HCT116 (cell line): ENCODE measurements at regions of chr9 and their contacts with region 1.

Region 1: GRCh38 chr9:96327694-96328352 is 25.8 kb upstream of the HSD17B3 start:
- DNase-seq: no peak
- ATAC-seq: peak; percentile 77
- H3K4me3 ChIP-seq: no peak overlapping the region
- H3K27ac ChIP-seq: no peak overlapping the region
- H3K4me1 ChIP-seq: peaks cover 9 to 20% of the 10 kb centered on the region in 2 experiments
- H3K27me3 ChIP-seq: no peaks in the 10 kb centered on the region
- CTCF ChIP-seq: peak; percentile 70 to 77 (median 75); a peak in 5 of 6 replicates
- POLR2A ChIP-seq: no peak
- RAD21 ChIP-seq: peak; percentile 83

Region 2: DNA sequence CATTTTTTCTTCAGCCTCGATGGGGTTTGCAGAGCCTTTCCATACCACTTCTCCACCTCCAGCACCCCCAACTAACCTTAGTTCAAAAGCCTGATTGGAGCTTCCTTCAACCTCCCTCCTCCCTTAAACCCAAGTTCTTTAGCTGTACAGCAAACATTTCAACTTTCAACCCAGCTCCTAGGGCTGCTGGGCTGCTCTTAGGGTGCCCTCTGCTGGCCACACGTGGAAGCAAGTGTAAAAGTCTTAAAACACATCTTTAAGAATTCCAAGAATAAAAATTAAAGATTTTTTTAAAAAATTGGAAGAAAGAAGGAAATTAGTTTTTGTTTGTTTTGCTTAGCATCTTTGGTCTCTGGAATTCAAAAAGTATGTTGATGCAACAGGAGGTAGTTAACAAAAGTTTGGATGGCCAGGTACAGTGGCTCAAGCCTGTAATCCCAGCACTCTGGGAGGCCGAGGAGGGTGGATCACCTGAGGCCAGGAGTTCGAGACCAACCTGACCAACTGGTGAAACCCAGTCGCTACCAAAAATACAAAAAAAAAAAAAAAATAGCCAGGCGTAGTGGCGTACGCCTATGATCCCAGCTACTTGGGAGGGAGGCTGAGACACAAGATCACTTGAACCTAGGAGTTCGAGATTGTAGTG is 10.4 kb before region 1 on chr9:
- CTCF ChIA-PET with region 1: interaction called, 10 read pairs
- POLR2A ChIA-PET with region 1: no interaction called
- RAD21 ChIA-PET with region 1: no interaction called
- intact Hi-C with region 1: no loop called
- DNase-seq: peak; percentile 41
- ATAC-seq: peak; percentile 86
- H3K4me3 ChIP-seq: no peak overlapping the region
- H3K27ac ChIP-seq: no peak overlapping the region
- H3K4me1 ChIP-seq: no peaks in the 10 kb centered on the region
- H3K27me3 ChIP-seq: no peaks in the 10 kb centered on the region
- CTCF ChIP-seq: peak; percentile 90 to 95 (median 92)
- POLR2A ChIP-seq: no peak
- RAD21 ChIP-seq: peak; percentile 96

Region 3: GRCh38 chr9:96654443-96655197 is 326.8 kb after region 1 on chr9:
- CTCF ChIA-PET with region 1: no interaction called
- POLR2A ChIA-PET with region 1: no interaction called
- RAD21 ChIA-PET with region 1: no interaction called
- intact Hi-C with region 1: loop called (anchors 5 kb)
- DNase-seq: peak; percentile 54
- ATAC-seq: peak; percentile 76
- H3K4me3 ChIP-seq: peak overlapping the region; percentile 47 to 65
- H3K27ac ChIP-seq: peak overlapping the region; percentile 91
- H3K4me1 ChIP-seq: peaks cover 5 to 22% of the 10 kb centered on the region in 2 experiments; a peak in 3 of 4 replicates
- H3K27me3 ChIP-seq: no peaks in the 10 kb centered on the region
- CTCF ChIP-seq: no peak
- POLR2A ChIP-seq: no peak
- RAD21 ChIP-seq: no peak

Region 4: DNA sequence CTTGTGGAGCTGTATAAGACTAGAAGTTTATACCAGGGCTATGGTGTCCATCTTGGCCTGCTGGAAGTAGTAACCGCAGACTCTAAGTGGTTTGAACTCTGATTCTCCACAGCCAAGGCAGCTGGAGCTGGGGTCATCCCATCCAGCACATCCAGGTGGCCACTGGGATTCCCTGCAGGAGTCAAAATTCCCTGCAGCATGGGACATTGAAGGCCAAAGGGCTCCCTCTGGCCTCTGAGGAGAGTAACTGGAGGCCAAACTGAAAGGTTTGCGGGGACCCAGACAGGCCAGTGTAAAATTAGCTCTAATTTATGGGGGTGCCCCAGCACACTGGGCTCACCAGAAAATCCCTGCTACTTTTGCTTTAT is 339.5 kb after region 1 on chr9:
- CTCF ChIA-PET with region 1: interaction called, 13 read pairs
- POLR2A ChIA-PET with region 1: no interaction called
- RAD21 ChIA-PET with region 1: interaction called in 1 of 2 experiments, 4 read pairs
- intact Hi-C with region 1: loop called (anchors 5 kb)
- DNase-seq: no peak
- ATAC-seq: peak; percentile 39
- H3K4me3 ChIP-seq: no peak overlapping the region
- H3K27ac ChIP-seq: no peak overlapping the region
- H3K4me1 ChIP-seq: peaks cover 0 to 3% of the 10 kb centered on the region in 2 experiments; a peak in 2 of 4 replicates
- H3K27me3 ChIP-seq: no peaks in the 10 kb centered on the region
- CTCF ChIP-seq: no peak
- POLR2A ChIP-seq: no peak
- RAD21 ChIP-seq: 0 out of 2 replicates have a peak, but pooled peaks have one; percentile 6